Activated CD4-positive, alpha-beta T cell treated with anti-CD3 and anti-CD28 coated beads, Interleukin-2, amount 10 ng/mL, durations not matched to agents 7 days and 5 days (primary cell): ENCODE measurements at regions of chr4 and their contacts with region 1.

Region 1: GRCh38 chr4:2934813-2935761 is 28.1 kb downstream of the NOP14 start:
- DNase-seq: peak; percentile 96
- H3K4me3 Mint-ChIP-seq: peak overlapping the region; percentile 85
- H3K27ac Mint-ChIP-seq: peak overlapping the region; percentile 91
- H3K4me1 Mint-ChIP-seq: peaks cover 51% of the 10 kb centered on the region
- H3K27me3 Mint-ChIP-seq: no peaks in the 10 kb centered on the region

Region 2: DNA sequence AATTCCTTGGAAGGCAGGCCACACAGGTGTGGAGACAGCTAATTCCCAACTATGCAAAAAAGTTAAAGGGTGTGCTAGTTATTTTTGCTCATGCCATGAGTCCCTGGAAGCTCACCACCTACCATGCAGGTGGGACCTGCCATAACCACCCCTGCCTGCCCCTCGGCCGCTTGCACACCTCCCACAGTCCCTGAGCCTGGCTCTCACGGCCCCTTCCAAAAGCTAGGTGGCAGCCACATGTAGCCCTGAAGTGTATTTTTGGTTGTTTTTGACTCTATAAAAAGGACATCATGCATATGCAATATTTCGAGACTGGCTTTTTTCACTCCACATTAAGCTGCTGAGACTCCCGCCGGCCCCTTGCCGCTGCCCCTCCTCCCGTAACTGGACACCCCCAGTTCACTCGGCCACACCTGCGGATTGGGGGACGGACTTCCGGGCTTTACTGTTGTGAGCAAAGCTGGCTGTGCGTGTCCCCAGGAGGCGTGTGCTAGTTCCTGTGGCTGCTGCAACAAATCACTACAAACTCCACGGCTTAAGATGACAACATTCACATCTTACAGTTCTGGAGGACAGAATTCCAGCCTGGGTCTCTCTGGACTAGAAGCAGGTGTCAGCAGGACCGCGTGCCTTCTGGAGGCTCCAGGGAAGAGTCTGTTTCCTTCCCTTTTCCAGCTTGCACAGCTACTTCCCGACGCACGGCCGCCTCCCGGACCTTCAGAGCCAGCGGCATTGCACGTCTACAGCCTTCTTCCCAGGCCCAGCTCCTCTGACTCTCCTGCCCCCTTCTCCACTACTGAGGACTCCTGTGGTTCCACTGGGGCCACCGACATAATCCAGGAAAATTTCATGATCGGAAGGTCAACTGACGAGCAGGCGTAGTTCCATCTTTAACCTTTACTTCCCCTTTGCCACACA is 541.5 kb before region 1 on chr4:
- CTCF ChIA-PET with region 1: no interaction called
- POLR2A ChIA-PET with region 1: no interaction called
- DNase-seq: peak; percentile 17
- H3K4me3 Mint-ChIP-seq: no peak overlapping the region
- H3K27ac Mint-ChIP-seq: peak overlapping the region; percentile 76
- H3K4me1 Mint-ChIP-seq: peaks cover 18% of the 10 kb centered on the region
- H3K27me3 Mint-ChIP-seq: peaks cover 23% of the 10 kb centered on the region

Region 3: DNA sequence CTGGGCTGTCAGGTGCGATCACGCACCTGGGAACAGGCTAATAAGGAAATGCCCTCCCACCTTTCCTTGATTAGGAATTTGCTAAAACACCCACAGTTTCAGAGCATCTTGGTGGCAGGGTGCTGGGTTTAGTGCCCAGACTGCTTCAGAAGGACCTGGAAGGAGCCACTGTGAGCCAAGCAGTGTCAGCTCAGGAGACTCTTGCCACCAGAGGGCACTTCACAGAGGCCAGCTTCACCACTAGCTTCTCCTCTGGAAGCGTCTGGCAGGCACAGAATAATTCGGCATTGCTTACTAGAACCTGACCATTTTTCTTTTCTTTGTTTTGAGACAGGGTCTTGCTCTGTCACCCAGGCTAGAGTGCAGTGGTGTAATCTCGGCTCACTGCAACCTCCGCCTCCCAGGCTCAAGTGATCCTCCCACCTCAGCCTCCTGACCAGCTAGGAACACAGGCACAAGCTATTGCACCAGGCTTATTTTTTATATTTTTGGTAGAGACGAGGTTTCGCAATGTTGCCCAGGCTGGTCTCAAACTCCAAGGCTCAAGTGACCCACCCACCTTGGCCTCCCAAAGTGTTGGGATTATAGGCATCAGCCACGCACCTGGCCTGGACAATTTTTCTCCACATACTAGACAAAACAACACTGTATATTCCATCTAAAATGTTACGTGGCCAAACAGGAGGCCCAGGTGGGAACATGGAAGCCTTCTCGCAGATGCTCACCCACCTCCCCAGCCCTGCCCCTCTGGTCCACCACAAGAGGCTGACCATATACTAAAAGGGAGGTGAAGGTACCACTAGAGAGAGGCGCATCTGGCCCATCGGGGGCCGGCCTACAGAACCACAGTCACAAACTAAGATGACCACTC is 14.0 kb after region 1 on chr4:
- CTCF ChIA-PET with region 1: interaction called, 30 read pairs
- POLR2A ChIA-PET with region 1: no interaction called
- DNase-seq: peak; percentile 41
- H3K4me3 Mint-ChIP-seq: no peak overlapping the region
- H3K27ac Mint-ChIP-seq: no peak overlapping the region
- H3K4me1 Mint-ChIP-seq: peaks cover 7% of the 10 kb centered on the region
- H3K27me3 Mint-ChIP-seq: no peaks in the 10 kb centered on the region

Region 4: DNA sequence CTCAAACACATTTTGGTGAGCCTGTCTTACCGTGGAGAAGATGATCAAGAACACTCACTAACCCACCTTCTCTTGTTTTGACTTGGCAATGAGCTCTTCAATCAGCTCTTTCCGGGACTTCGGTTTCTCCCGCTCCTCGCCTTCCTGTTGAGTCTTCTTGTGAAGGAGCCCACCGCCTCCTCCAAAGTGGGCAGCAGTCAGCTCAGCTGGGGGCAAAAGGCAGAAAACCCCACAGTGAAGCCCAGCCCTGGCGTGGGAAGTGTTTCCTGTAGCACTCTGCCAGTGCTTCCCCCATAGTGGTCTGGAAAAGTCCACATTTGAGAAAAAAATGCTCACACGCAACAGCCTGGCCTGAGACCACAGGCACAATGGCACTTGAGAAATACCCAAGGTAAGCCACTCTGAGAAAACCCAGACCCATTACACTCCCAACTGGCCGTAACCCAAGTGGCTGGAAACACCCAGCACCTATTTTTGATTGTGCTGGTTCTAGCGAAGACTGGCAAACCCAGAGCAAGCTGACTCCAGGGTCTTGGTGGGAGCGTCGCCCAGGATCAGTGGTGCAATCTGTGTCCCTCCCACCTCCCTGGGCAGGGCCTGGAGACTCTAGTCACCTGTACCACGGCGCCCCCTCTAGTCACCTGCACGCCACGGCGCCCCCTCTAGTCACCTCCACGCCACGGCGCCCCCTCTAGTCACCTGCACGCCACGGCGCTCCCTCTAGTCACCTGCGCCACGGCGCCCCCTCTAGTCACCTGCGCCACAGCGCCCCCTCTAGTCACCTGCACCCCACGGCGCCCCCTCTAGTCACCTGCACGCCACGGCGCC is 19.5 kb after region 1 on chr4:
- CTCF ChIA-PET with region 1: interaction called, 30 read pairs
- POLR2A ChIA-PET with region 1: no interaction called
- DNase-seq: peak; percentile 49
- H3K4me3 Mint-ChIP-seq: peak overlapping the region; percentile 6
- H3K27ac Mint-ChIP-seq: peak overlapping the region; percentile 88
- H3K4me1 Mint-ChIP-seq: peaks cover 46% of the 10 kb centered on the region
- H3K27me3 Mint-ChIP-seq: no peaks in the 10 kb centered on the region

Region 5: GRCh38 chr4:2971275-2971674 is 36.2 kb after region 1 on chr4:
- CTCF ChIA-PET with region 1: no interaction called
- POLR2A ChIA-PET with region 1: no interaction called
- DNase-seq: no peak
- H3K4me3 Mint-ChIP-seq: no peak overlapping the region
- H3K27ac Mint-ChIP-seq: no peak overlapping the region
- H3K4me1 Mint-ChIP-seq: no peaks in the 10 kb centered on the region
- H3K27me3 Mint-ChIP-seq: no peaks in the 10 kb centered on the region